ENCODE measurements at regions of chr9 and their contacts with region 1.

Region 1: GRCh38 chr9:116899337-116900006 is 212.4 kb downstream of the TRIM32 start:
- DNase-seq: no peak
- ATAC-seq: no peak
- H3K4me3 ChIP-seq: no peak overlapping the region
- H3K27ac ChIP-seq: no peak overlapping the region
- H3K4me1 ChIP-seq: no peaks in the 10 kb centered on the region
- H3K27me3 ChIP-seq: no peaks in the 10 kb centered on the region
- CTCF ChIP-seq: no peak
- POLR2A ChIP-seq: no peak

Region 2: GRCh38 chr9:116951588-116952435 is 52.3 kb after region 1 on chr9:
- intact Hi-C with region 1: loop called in 1 of 10 experiments (anchors 10 kb)
- DNase-seq: no peak
- ATAC-seq: no peak
- H3K4me3 ChIP-seq: no peak overlapping the region
- H3K27ac ChIP-seq: no peak overlapping the region
- H3K4me1 ChIP-seq: no peaks in the 10 kb centered on the region
- H3K27me3 ChIP-seq: peaks cover 0 to 4% (median 0%) of the 10 kb centered on the region in 9 donors
- CTCF ChIP-seq: no peak
- POLR2A ChIP-seq: no peak

Region 3: DNA sequence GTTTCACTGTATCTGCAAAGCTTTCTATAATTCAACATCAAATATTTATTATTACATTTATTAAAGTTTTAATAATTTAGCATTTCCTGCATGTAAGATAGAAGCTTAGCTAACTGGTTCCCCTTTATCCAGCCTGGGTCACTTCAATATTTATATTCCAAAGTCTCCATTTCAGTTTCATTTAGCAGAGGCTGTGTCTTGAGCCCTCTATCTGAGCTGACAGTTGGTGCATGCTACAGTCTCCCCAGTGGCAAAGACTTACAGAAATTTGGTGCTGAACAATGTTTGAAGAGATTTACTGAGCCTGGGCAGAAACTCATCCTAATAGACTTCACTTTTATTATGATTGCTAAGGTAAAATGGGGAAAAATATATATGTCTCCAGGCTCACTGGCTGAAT is 66.7 kb after region 1 on chr9:
- intact Hi-C with region 1: no loop called
- DNase-seq: no peak
- ATAC-seq: no peak
- H3K4me3 ChIP-seq: no peak overlapping the region
- H3K27ac ChIP-seq: no peak overlapping the region
- H3K4me1 ChIP-seq: no peaks in the 10 kb centered on the region
- H3K27me3 ChIP-seq: no peaks in the 10 kb centered on the region
- CTCF ChIP-seq: no peak
- POLR2A ChIP-seq: no peak